Esophagus muscularis mucosa (tissue), 4 donors: ENCODE measurements at regions of chr22 and their contacts with region 1.

Region 1: DNA sequence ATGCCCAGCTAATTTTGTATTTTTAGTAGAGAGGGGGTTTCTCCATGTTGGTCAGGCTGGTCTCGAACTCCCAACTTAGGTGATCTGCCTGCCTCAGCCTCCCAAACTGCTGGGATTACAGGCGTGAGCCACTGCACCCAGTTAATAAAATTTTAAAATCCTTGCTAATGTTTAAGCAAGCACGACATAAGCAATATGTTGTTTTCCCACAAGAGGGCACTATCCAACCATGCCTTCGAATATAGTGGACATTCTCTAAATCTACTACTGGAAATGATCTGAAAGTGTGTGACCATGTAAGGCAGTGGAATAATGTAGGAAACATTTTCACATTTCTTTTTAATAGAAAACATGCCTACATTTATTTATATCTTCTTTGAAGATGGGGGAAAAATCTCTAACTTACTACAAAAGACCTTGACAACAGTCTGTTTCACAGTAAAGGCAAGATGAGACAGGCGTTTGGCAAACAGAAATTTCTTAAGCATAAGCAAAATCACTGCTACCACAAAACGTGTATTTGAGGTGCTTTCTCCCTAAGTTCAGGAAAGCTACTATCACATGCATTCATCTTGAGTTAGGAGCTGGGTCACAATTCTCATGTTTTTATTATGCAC is 38.2 kb downstream of the PITPNB start:
- DNase-seq: no peak
- H3K4me3 ChIP-seq: peak overlapping the region in 3 of 4 donors; percentile 0 to 8 (median 8)
- H3K27ac ChIP-seq: peak overlapping the region; percentile 82 to 85 (median 84)
- H3K4me1 ChIP-seq: peaks cover 63 to 97% (median 95%) of the 10 kb centered on the region in 4 donors
- H3K27me3 ChIP-seq: no peaks in the 10 kb centered on the region
- CTCF ChIP-seq: peak; percentile 87 to 91 (median 87)
- EP300 ChIP-seq: no peak
- POLR2A ChIP-seq: no peak

Region 2: GRCh38 chr22:27919222-27919941 is 38.5 kb after region 1 on chr22 and contains the start of gene PITPNB:
- intact Hi-C with region 1: loop called (anchors 5 kb)
- DNase-seq: peak; percentile 99
- H3K4me3 ChIP-seq: peak within 1 kb of the TSS; percentile 83 to 98 (median 95)
- H3K27ac ChIP-seq: peak within 1 kb of the TSS; percentile 93 to 99 (median 98)
- H3K4me1 ChIP-seq: peaks cover 44 to 58% (median 56%) of the 10 kb centered on the region in 4 donors
- H3K27me3 ChIP-seq: no peaks in the 10 kb centered on the region
- CTCF ChIP-seq: peak in 1 of 3 experiments; percentile 21
- EP300 ChIP-seq: no peak
- POLR2A ChIP-seq: peak; percentile 53
- total RNA-seq, gene PITPNB: 70.3 to 99.7 (median 89.3) TPM